ENCODE measurements at regions of chr7 and their contacts with region 1.

Region 1: GRCh38 chr7:134432296-134433152 is 26.4 kb downstream of the AKR1B1 start:
- DNase-seq: peak; percentile 40
- H3K4me3 ChIP-seq: peak overlapping the region; percentile 18 to 60 (median 36)
- H3K27ac ChIP-seq: peak overlapping the region; percentile 71 to 90 (median 82)
- H3K4me1 ChIP-seq: peaks cover 0 to 19% (median 9%) of the 10 kb centered on the region in 3 donors
- H3K27me3 ChIP-seq: no peaks in the 10 kb centered on the region
- CTCF ChIP-seq: peak; percentile 56 to 83 (median 76)
- POLR2A ChIP-seq: peak in 1 of 4 donors; percentile 53

Region 2: DNA sequence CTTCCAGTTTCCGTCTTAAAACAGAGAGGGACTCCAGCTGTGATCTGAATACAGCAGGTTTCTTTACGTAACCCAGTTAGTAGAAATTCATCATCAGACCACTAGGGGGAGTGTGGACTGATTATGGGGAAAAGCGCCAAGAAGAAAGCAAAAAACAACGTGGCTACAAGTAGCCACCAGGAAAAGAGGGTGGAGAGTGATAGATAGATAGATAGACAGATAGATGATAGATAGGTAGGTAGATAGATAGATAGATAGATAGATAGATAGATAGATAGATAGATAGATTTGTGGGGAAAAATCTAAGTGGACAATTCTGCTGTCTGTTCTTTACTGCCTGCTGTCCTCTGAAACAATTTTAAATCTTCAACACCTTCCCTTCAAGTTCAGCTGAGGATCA is 82.1 kb after region 1 on chr7:
- intact Hi-C with region 1: loop called (anchors 2 kb)
- DNase-seq: no peak
- H3K4me3 ChIP-seq: no peak overlapping the region
- H3K27ac ChIP-seq: peak overlapping the region in 2 of 4 donors; percentile 38 to 53
- H3K4me1 ChIP-seq: peaks cover 6 to 27% (median 11%) of the 10 kb centered on the region in 3 donors
- H3K27me3 ChIP-seq: peaks cover 0 to 5% (median 0%) of the 10 kb centered on the region in 4 donors
- CTCF ChIP-seq: peak; percentile 68 to 89 (median 82)
- POLR2A ChIP-seq: no peak

Region 3: GRCh38 chr7:134605973-134606923 is 173.7 kb after region 1 on chr7:
- intact Hi-C with region 1: loop called (anchors 10 kb)
- DNase-seq: no peak
- H3K4me3 ChIP-seq: peak overlapping the region in 1 of 4 donors; percentile 28
- H3K27ac ChIP-seq: peak overlapping the region in 3 of 4 donors; percentile 5 to 17 (median 7)
- H3K4me1 ChIP-seq: peaks cover 4 to 32% (median 5%) of the 10 kb centered on the region in 3 donors
- H3K27me3 ChIP-seq: no peaks in the 10 kb centered on the region
- CTCF ChIP-seq: peak; percentile 68 to 95 (median 92)
- POLR2A ChIP-seq: no peak

Region 4: DNA sequence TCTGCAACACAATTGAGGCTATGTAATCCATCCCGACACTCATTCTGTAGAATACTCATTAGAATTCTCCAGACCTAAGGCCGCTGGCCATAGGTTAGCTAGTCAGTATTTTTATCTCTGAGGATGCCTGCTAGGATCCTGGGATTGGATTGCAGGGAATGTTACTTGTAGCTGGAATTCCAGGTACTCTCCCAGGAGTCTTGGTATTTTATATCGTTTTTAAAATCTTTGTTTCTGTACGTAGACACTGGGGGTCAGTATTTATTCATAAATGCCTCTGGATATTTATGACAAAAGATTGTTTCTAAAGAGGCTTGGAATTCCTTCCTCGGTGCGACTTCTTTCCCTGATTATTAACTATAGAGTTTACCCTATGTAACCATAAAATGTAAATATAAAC is 254.3 kb after region 1 on chr7:
- intact Hi-C with region 1: no loop called
- DNase-seq: no peak
- H3K4me3 ChIP-seq: no peak overlapping the region
- H3K27ac ChIP-seq: no peak overlapping the region
- H3K4me1 ChIP-seq: peaks cover 0 to 17% (median 13%) of the 10 kb centered on the region in 3 donors
- H3K27me3 ChIP-seq: no peaks in the 10 kb centered on the region
- CTCF ChIP-seq: peak in 4 of 6 experiments; percentile 19 to 44 (median 22)
- POLR2A ChIP-seq: no peak

Measured in esophagus squamous epithelium (tissue), 5 donors.